ENCODE measurements at regions of chr15 and their contacts with region 1.

Region 1: DNA sequence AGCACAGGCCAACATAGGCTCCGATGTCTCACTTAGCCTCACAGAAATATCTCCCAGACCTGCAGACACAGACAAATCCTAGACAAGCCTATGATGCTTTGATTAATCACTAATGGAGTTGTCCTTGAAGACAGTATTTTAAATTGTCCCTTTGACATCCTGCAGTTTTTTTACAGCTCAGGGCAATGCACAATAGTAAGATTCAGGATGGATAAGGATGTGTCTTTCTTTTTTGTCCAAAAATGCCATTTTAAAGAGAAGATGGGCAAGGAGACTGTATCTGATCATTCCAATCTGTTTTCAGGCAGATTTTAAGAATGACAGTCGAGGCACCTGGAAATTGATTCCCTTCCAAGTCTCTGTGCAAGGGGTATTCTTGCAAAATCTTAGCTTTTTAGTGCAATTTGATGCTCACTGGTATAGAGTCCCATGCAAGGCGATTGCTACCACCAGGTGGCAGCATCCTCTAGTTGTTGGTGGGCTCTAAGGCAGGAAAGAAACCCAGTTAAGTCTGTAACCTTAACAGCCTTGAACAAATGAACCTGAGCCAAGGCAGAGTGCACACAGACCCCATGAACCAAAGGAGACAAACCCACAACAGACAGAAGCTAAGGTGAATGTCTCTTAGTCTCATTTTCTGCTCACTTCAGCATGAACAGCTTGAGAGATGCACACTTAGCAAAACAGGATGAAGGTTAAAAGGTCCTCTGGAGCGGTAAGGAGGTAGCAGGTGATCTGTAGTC is 51.2 kb upstream of the MINAR1 start:
- DNase-seq: no peak
- H3K4me3 ChIP-seq: no peak overlapping the region
- CTCF ChIP-seq: peak; percentile 85

Region 2: GRCh38 chr15:79290642-79291275 is 90.2 kb before region 1 on chr15:
- CTCF ChIA-PET with region 1: no interaction called
- POLR2A ChIA-PET with region 1: no interaction called
- DNase-seq: no peak
- H3K4me3 ChIP-seq: no peak overlapping the region
- CTCF ChIP-seq: no peak

Region 3: GRCh38 chr15:79349525-79349924 is 31.4 kb before region 1 on chr15:
- CTCF ChIA-PET with region 1: interaction called, 48 read pairs
- POLR2A ChIA-PET with region 1: no interaction called
- DNase-seq: no peak
- H3K4me3 ChIP-seq: no peak overlapping the region
- CTCF ChIP-seq: no peak

Region 4: GRCh38 chr15:79370716-79371115 is 10.2 kb before region 1 on chr15:
- CTCF ChIA-PET with region 1: interaction called, 115 read pairs
- POLR2A ChIA-PET with region 1: no interaction called
- DNase-seq: no peak
- H3K4me3 ChIP-seq: no peak overlapping the region
- CTCF ChIP-seq: no peak

Region 5: DNA sequence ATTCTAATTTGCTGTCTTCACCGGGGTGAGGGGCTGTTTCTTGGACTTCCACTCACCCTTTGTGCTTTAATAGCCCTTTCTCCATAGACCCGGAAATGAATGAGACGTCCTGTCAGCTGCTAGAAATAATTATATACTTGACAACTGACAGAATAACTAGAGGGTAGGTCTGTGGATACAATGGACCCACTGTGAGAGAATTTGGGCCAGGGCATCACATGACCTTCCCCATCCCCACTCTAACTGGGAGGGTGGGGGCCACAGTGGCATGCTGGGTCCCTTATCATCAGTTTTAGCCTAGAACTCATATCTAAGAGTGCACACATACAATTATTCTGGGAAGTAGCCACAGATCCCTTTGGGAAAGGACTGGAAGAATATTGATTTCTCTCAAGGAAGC is 25.3 kb after region 1 on chr15:
- CTCF ChIA-PET with region 1: interaction called, 17 read pairs
- POLR2A ChIA-PET with region 1: no interaction called
- DNase-seq: no peak
- H3K4me3 ChIP-seq: no peak overlapping the region
- CTCF ChIP-seq: no peak

Region 6: DNA sequence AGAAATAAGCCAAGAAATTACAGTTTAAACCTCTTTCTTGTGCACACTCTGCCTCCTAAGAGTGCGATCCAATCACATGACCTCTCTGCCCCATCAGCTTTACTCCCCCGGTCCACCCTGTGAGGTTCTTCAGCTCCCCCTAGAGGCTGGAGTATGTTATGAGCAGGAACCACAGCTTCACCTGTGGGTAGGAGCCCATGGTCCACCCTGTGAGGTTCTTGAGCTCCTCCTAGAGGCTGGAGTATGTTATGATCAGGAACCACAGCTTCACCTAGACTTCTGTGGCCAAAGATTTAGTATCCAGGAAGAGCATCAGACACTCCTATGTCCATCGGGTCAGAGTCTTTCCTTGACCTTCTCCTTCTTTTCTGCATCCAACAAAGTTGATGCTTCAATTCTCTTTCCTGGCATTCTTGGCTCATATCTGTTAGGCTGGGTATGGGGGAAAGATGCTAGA is 215.2 kb after region 1 on chr15:
- CTCF ChIA-PET with region 1: interaction called, 172 read pairs
- POLR2A ChIA-PET with region 1: no interaction called
- DNase-seq: no peak
- H3K4me3 ChIP-seq: no peak overlapping the region
- CTCF ChIP-seq: peak; percentile 66

Region 7: DNA sequence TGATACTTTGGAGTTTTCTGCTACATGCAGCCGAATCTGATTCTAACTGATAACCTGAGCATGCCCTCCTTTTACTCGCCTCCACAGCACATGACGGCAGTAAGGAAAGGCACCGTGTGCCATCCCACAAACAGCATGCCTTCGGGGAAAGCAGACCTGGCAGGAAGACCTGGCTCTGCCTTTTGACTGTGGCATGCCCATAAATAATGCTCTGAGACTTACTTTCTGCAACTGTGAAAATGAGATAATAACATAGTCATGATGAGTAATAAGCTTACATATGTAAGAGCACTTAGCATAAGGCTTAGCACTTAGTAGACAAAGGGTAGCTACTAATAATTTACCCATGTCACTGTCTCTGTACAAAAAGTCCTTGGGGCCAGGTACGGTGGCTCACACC is 483.0 kb after region 1 on chr15:
- CTCF ChIA-PET with region 1: interaction called, 21 read pairs
- POLR2A ChIA-PET with region 1: interaction called, 3 read pairs
- DNase-seq: no peak
- H3K4me3 ChIP-seq: no peak overlapping the region
- CTCF ChIP-seq: no peak